MCF 10A (cell line): ENCODE measurements at regions of chrX and their contacts with region 1.

Region 1: DNA sequence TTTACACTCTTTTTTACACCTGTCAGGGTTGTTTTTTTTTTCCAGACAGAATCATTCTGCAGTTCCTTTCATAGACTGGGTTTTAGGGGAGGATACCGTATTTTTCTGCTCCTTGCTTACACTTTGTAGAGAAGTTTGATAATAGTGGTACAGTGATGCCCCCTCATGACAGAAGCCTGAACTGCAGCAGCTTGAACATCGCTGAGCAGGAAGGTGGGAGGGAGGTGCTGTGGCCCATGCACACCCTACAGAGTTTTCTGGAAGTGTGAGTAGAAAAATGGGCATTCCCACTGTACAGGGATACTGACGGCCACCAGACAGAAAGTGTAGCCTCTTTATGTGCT is 54.5 kb downstream of the RAB40A start:
- DNase-seq: peak; percentile 77
- H3K4me3 Mint-ChIP-seq: peak overlapping the region; percentile 70
- H3K27ac Mint-ChIP-seq: peak overlapping the region; percentile 38
- H3K4me1 Mint-ChIP-seq: peaks cover 5% of the 10 kb centered on the region
- H3K27me3 Mint-ChIP-seq: peaks cover 50% of the 10 kb centered on the region
- CTCF ChIP-seq: peak; percentile 76

Region 2: DNA sequence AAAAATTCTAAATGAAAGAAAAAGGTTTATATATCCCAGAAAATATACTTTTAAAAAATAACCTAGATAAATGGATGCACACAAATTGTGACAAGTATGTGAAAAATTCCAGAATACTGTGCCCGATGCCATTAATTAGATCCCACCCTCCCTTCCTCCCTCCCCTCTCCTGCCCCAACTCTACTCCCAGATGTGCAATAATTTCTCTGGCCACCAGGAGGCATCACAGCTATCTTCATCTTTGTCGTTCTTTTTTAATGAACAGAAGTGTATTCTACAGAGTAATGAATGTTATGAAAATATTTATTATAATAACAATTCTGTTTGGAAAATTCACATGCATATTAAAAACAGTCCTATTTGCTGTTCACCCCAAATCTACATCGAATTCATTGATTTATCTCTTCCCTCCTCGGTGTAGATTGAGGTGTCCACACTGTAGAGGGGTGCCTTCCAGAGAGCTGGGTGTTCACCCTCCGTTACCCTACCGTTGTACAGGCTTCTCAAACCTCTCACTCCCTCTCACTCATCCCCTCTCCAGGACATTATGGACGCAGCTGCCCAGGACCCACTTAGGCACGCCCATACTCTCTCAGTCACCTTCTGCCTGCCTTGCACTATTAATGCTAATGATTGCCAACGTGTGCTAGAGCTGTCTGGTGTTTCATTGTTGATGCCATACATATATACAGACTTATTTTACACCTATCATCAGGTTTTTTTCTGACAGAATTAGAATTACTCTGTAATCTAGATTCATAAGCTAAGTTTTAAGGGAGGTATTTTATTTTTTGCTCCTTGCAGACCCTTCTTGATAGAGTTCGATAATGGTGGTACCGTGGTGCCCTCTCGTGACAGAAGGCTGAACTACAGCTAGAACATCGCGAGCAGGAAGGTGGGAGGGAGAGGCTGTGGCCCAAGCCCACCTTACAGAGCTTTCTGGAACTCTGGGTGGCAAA is 513.6 kb before region 1 on chrX:
- CTCF ChIA-PET with region 1: interaction called, 3 read pairs
- POLR2A ChIA-PET with region 1: no interaction called
- intact Hi-C with region 1: loop called (anchors 10 kb)
- DNase-seq: peak; percentile 74
- H3K4me3 Mint-ChIP-seq: no peak overlapping the region
- H3K27ac Mint-ChIP-seq: no peak overlapping the region
- H3K4me1 Mint-ChIP-seq: peaks cover 5% of the 10 kb centered on the region
- H3K27me3 Mint-ChIP-seq: peaks cover 64% of the 10 kb centered on the region
- CTCF ChIP-seq: peak; percentile 58

Region 3: GRCh38 chrX:103254921-103255493 is 209.7 kb before region 1 on chrX and contains the start of gene TCEAL8:
- CTCF ChIA-PET with region 1: interaction called, 3 read pairs
- POLR2A ChIA-PET with region 1: interaction called, 5 read pairs
- intact Hi-C with region 1: loop called (anchors 5 kb)
- DNase-seq: peak; percentile 70
- H3K4me3 Mint-ChIP-seq: peak within 1 kb of the TSS; percentile 92
- H3K27ac Mint-ChIP-seq: peak within 1 kb of the TSS; percentile 66
- H3K4me1 Mint-ChIP-seq: peaks cover 7% of the 10 kb centered on the region
- H3K27me3 Mint-ChIP-seq: peaks cover 72% of the 10 kb centered on the region
- CTCF ChIP-seq: no peak
- total RNA-seq, gene TCEAL8: 20.2 and 22.1 TPM in 2 replicates

Region 4: DNA sequence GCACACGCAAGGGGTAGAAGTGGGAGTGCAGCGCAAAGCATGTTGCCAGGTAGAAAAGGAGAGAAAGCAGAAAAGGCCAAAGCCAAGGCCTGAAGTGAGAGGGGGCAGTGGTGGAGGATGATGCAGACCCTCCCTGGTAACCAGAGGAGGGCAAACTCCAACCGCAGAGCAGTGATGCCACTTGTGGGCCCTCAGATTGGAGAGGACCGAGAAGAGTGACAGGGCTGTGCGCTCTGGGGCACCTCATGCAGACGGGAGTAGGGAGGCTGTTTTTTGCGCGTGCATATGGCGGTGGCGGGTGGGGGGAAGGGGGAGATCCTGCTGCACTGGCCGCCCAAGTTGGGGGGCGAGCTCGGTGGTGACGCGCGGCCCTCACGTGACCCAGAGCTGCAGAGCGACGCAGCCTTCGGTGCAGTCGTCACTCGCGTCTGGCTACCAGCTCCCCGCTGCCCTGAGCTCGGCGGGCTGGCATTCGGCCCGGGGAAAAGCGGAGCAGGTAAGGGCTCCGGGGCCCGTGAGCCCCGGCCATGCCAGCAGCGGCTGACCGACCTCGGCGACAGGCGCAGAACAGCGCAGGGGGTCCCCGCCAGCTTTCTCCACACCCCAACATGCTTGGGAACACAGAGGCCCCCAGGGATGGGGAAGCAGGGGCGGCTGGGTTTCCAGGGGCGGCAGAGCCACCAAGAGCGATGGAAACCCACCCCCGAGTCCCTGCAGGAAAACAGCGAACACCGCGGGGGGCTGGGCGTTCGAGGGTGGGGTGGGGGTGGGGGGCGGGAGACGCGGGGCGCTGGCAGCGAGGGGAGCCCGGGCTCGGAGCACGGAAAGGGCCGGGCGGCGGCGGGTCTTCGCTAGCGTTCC is 88.4 kb before region 1 on chrX and contains the start of gene BEX3:
- CTCF ChIA-PET with region 1: interaction called, 4 read pairs
- POLR2A ChIA-PET with region 1: interaction called, 4 read pairs
- intact Hi-C with region 1: loop called (anchors 1 kb)
- DNase-seq: peak; percentile 29
- H3K4me3 Mint-ChIP-seq: peak within 1 kb of the TSS; percentile 74
- H3K27ac Mint-ChIP-seq: peak within 1 kb of the TSS; percentile 67
- H3K4me1 Mint-ChIP-seq: peaks cover 5% of the 10 kb centered on the region
- H3K27me3 Mint-ChIP-seq: peaks cover 24% of the 10 kb centered on the region
- CTCF ChIP-seq: no peak
- total RNA-seq, gene BEX3: 166 and 173 TPM in 2 replicates

Region 5: GRCh38 chrX:103488332-103488731 is 23.6 kb after region 1 on chrX:
- CTCF ChIA-PET with region 1: interaction called, 10 read pairs
- POLR2A ChIA-PET with region 1: no interaction called
- intact Hi-C with region 1: no loop called
- DNase-seq: peak; percentile 41
- H3K4me3 Mint-ChIP-seq: no peak overlapping the region
- H3K27ac Mint-ChIP-seq: no peak overlapping the region
- H3K4me1 Mint-ChIP-seq: no peaks in the 10 kb centered on the region
- H3K27me3 Mint-ChIP-seq: peaks cover 48% of the 10 kb centered on the region
- CTCF ChIP-seq: peak; percentile 53

Region 6: DNA sequence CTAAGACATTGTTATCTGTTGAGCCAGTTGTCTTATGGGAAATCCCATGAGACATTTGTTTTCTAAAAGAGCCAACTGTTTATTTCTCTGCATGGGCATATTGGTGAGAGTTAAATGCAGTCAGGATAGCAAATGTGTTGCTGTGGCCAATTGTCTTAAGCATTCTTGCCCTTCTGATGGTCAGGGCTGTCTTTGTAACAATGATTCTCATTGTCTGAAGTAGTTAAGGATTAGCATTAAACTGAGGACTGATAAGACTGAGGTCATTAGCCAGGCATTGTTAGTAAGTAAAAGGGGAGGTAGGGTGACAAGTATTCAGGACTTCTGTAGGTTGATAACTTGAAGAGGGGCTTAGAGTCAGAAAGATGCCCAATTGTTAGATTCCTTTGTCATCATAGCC is 232.9 kb after region 1 on chrX:
- CTCF ChIA-PET with region 1: no interaction called
- POLR2A ChIA-PET with region 1: no interaction called
- intact Hi-C with region 1: no loop called
- DNase-seq: no peak
- H3K4me3 Mint-ChIP-seq: no peak overlapping the region
- H3K27ac Mint-ChIP-seq: no peak overlapping the region
- H3K4me1 Mint-ChIP-seq: no peaks in the 10 kb centered on the region
- H3K27me3 Mint-ChIP-seq: peaks cover 63% of the 10 kb centered on the region
- CTCF ChIP-seq: no peak

Region 7: DNA sequence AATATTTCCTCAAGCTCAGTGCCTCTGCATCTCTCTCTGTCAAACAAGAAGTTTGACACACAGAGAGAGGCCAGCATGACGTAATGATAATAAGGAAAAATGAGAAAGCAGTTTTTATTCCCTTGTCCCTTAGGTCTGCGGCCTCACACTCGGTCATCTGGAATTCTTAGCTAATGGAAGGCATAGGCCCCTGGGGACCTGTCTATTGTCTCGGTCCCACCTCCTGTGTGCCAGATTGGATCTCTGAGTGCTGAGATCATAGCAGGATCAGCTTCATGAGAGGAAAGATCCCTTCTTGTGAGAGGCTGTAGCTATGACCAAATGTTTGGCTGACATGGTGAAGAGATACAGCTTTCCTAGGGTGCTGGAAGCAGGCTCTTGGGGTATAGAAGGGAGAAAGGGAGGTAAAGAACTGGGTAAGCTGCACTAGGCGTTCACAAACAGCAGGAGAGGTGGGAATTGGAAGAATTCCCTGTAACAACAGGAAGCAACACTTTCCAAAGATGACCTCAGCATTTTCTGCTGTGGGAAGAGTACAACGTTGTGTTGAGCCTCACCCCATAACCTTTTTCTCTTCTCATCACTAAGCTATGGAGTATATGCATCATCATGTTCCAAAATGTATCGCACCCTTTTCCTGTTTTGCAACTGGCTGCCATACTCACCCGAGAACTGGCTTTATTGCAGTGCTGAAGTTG is 266.2 kb after region 1 on chrX:
- CTCF ChIA-PET with region 1: no interaction called
- POLR2A ChIA-PET with region 1: no interaction called
- intact Hi-C with region 1: no loop called
- DNase-seq: peak; percentile 81
- H3K4me3 Mint-ChIP-seq: no peak overlapping the region
- H3K27ac Mint-ChIP-seq: peak overlapping the region; percentile 84
- H3K4me1 Mint-ChIP-seq: peaks cover 27% of the 10 kb centered on the region
- H3K27me3 Mint-ChIP-seq: peaks cover 63% of the 10 kb centered on the region
- CTCF ChIP-seq: no peak